Heart left ventricle (tissue), 16 donors: ENCODE measurements at regions of chr1 and their contacts with region 1.

Region 1: DNA sequence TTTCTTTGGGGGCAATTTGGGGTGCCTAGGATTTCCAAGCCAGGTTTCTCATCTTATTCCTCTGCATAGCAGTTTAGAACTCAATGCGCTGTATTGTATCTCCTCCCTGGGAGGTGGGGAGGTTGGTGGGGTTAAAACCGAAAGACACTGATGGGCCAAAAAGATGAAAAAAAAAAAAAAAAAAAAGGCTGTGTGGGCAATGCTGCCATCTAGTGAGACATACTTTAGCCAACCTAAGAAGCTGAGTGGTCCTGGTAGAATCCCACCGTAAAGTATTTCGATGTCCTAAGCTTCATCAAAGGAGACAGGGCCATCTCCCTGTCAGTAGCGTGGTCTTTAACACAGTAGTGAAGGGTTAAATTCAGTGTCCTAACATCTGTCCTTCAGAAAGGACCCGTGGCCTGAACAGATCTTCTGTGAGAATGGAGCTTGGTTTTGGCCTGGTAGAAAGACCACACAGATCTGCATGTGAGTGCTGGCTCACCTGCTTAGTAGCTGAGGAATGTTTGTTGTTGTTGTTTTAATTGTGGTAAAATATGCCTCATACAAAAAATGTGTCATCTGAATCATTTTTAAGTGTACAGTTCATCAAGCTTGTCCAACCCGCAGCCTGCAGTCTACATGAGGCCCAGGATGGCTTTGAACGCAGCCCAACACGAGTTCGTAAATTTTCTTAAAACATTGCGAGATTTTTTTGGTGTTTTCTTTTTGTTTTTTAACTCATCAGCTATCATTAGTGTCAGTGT is 226.2 kb downstream of the KIF26B start:
- DNase-seq: no peak
- ATAC-seq: no peak
- H3K4me3 ChIP-seq: no peak overlapping the region
- H3K27ac ChIP-seq: no peak overlapping the region
- H3K4me1 ChIP-seq: no peaks in the 10 kb centered on the region
- H3K27me3 ChIP-seq: peaks cover 0 to 12% (median 0%) of the 10 kb centered on the region in 9 donors
- CTCF ChIP-seq: peak; percentile 11 to 56 (median 40)
- POLR2A ChIP-seq: no peak

Region 2: DNA sequence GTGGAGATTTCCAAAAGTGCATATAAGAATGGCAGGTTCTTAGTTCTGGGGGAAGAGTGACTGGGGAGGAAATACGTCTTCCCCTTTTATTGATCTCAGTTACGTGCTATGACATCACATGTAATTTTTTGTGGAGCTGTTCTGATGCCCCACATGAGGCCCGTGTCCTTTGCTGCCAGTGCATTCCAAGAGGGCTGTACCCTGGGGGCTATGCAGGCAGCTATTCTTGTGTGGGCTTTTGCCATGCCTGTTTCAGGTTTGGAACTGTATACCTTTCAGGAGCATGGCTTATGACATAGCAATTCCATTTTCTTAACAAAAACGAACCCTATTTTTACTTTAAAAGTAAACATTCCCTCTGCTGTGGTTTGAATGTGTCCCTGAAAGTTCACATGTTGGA is 126.4 kb before region 1 on chr1:
- intact Hi-C with region 1: loop called in 1 of 10 experiments (anchors 5 kb)
- DNase-seq: no peak
- ATAC-seq: no peak
- H3K4me3 ChIP-seq: no peak overlapping the region
- H3K27ac ChIP-seq: no peak overlapping the region
- H3K4me1 ChIP-seq: no peaks in the 10 kb centered on the region
- H3K27me3 ChIP-seq: peaks cover 0 to 74% (median 0%) of the 10 kb centered on the region in 9 donors
- CTCF ChIP-seq: no peak
- POLR2A ChIP-seq: no peak

Region 3: DNA sequence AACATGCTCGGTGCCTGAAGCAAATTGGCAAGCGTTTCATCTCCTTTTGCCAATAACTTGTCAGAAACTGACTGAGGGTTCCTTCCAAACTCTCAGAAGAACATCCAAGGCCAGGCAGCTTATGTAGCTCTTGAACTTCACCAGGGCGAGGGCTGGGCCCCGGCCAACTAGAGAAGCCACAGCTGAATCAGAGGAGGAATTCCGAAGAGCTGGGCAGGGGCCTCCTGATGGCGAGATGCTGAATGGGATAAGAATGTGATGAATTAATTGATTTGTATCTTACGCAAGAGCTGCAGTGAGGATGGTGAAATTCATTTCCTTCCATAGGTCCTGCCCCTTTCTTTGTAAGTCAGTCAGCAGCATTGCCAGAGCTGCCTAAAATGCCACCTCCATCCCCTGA is 119.6 kb after region 1 on chr1:
- intact Hi-C with region 1: no loop called
- DNase-seq: no peak
- ATAC-seq: no peak
- H3K4me3 ChIP-seq: no peak overlapping the region
- H3K27ac ChIP-seq: no peak overlapping the region
- H3K4me1 ChIP-seq: no peaks in the 10 kb centered on the region
- H3K27me3 ChIP-seq: no peaks in the 10 kb centered on the region
- CTCF ChIP-seq: no peak
- POLR2A ChIP-seq: no peak